ENCODE measurements at regions of chr3 and their contacts with region 1.

Region 1: DNA sequence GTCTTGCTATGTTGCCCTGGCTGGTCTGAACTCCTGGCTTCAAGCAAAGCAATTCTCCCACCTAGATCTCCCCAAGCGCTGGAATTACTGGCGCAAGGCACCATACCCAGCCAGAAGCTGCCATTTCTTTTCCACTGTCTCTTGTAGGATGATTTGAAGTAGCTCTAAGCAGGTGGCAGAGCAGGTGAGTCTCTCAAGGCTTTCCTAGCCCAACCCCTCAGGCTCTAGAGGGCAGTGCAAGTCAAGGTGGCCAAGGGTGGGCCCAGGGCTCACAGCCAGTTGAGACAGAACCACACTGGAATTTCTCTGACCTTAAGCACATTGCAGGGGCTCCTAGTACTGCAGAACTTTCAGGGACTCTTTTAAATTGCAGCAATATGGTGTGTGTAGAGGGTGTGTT is 15.6 kb upstream of the DAG1 start:
- DNase-seq: no peak
- H3K4me3 ChIP-seq: no peak overlapping the region
- H3K27ac ChIP-seq: no peak overlapping the region
- H3K4me1 ChIP-seq: no peaks in the 10 kb centered on the region
- H3K27me3 ChIP-seq: no peaks in the 10 kb centered on the region
- CTCF ChIP-seq: no peak
- POLR2A ChIP-seq: no peak

Region 2: DNA sequence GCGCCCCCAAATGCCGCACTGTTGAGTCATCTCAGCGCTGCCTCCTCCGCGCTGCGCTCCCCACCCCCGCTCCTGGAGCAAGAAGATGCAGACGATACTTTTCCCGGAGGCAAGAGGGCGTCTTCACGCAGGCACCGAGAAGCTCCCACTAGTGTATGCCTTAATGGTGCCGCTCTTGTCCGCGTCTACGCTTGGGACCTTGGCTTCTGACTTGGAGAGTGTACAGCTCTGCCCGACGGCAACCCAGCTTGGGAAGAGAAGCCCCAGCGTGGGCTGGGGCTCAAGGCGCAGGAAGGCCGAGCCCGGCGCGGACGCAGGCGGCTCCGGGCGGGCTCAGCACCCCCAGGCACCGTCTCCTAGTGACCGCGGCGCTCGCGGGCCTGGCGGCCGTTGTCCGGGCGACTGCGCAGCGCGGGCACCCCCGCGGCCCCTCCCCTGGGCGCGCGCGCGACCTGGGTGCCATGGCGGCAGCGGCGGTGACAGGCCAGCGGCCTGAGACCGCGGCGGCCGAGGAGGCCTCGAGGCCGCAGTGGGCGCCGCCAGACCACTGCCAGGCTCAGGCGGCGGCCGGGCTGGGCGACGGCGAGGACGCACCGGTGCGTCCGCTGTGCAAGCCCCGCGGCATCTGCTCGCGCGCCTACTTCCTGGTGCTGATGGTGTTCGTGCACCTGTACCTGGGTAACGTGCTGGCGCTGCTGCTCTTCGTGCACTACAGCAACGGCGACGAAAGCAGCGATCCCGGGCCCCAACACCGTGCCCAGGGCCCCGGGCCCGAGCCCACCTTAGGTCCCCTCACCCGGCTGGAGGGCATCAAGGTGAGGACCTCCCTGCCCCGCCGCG is 464.4 kb before region 1 on chr3 and contains the start of gene P4HTM:
- CTCF ChIA-PET with region 1: interaction called, 25 read pairs
- POLR2A ChIA-PET with region 1: no interaction called
- dilution Hi-C with region 1: no loop called
- intact Hi-C with region 1: loop called (anchors 1 kb)
- DNase-seq: peak; percentile 93
- H3K4me3 ChIP-seq: peak within 1 kb of the TSS; percentile 25 to 69 (median 57)
- H3K27ac ChIP-seq: peak within 1 kb of the TSS; percentile 97
- H3K4me1 ChIP-seq: peaks cover 21% of the 10 kb centered on the region
- H3K27me3 ChIP-seq: no peaks in the 10 kb centered on the region
- CTCF ChIP-seq: peak in 1 of 2 donors; percentile 48
- POLR2A ChIP-seq: peak; percentile 61
- total RNA-seq, gene P4HTM: 23.0 and 26.9 TPM in 2 replicates

Region 3: DNA sequence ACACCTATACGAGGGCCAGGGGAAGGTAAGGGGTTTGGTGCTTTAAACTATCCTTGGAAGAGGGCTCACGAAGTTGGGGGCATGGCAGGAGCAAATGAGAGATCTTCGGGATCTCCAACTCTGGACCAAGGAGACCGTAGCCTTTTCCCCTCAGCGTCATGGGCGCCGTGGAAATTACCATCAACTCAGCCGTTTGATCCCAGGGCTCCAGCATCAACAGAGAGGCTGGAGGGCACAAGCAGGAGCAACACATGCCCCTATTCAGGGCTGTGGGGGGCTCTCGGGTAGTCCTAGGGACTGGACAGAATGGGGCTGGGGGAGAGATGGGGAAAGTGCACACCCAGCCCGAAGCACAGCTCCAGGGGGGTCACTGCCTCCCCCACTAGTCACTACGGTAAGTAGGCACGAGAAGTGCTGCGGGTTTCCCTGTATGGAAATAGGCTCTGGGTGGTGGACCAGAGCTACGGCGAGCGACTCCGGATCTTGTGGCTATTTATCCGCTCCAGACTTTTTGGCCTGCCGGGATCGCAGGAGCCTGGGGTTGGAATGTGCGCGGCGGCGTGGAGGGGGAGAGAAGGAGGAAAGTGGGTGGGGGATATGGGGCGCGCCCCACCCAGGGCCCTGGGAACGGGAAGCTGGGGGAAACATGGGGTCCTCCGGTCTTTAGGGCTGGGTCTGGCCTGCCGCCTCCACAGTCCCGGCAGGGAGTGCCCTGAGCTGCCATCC is 321.1 kb before region 1 on chr3:
- CTCF ChIA-PET with region 1: interaction called, 19 read pairs
- POLR2A ChIA-PET with region 1: no interaction called
- dilution Hi-C with region 1: no loop called
- intact Hi-C with region 1: no loop called
- DNase-seq: peak; percentile 92
- H3K4me3 ChIP-seq: peak overlapping the region; percentile 58 to 89 (median 83)
- H3K27ac ChIP-seq: peak overlapping the region; percentile 58
- H3K4me1 ChIP-seq: peaks cover 14% of the 10 kb centered on the region
- H3K27me3 ChIP-seq: no peaks in the 10 kb centered on the region
- CTCF ChIP-seq: no peak
- POLR2A ChIP-seq: peak; percentile 76

Region 4: GRCh38 chr3:49300595-49300994 is 153.9 kb before region 1 on chr3:
- CTCF ChIA-PET with region 1: interaction called, 29 read pairs
- POLR2A ChIA-PET with region 1: no interaction called
- dilution Hi-C with region 1: no loop called
- intact Hi-C with region 1: loop called (anchors 1 kb)
- DNase-seq: no peak
- H3K4me3 ChIP-seq: no peak overlapping the region
- H3K27ac ChIP-seq: no peak overlapping the region
- H3K4me1 ChIP-seq: no peaks in the 10 kb centered on the region
- H3K27me3 ChIP-seq: no peaks in the 10 kb centered on the region
- CTCF ChIP-seq: no peak
- POLR2A ChIP-seq: no peak

Region 5: GRCh38 chr3:49358217-49358883 is 96.1 kb before region 1 on chr3 and contains the start of gene GPX1:
- CTCF ChIA-PET with region 1: interaction called, 16 read pairs
- POLR2A ChIA-PET with region 1: interaction called, 3 read pairs
- dilution Hi-C with region 1: no loop called
- intact Hi-C with region 1: no loop called
- DNase-seq: peak; percentile 94
- H3K4me3 ChIP-seq: peak within 1 kb of the TSS; percentile 25 to 76 (median 71)
- H3K27ac ChIP-seq: peak within 1 kb of the TSS; percentile 66
- H3K4me1 ChIP-seq: peaks cover 31% of the 10 kb centered on the region
- H3K27me3 ChIP-seq: no peaks in the 10 kb centered on the region
- CTCF ChIP-seq: no peak
- POLR2A ChIP-seq: peak; percentile 98
- total RNA-seq, gene GPX1: 427 and 461 TPM in 2 replicates

Region 6: GRCh38 chr3:49422379-49423248 is 31.8 kb before region 1 on chr3 and contains the start of gene AMT:
- CTCF ChIA-PET with region 1: interaction called, 13 read pairs
- POLR2A ChIA-PET with region 1: no interaction called
- dilution Hi-C with region 1: no loop called
- intact Hi-C with region 1: no loop called
- DNase-seq: no peak
- H3K4me3 ChIP-seq: no peak within 1 kb of the TSS
- H3K27ac ChIP-seq: no peak within 1 kb of the TSS
- H3K4me1 ChIP-seq: no peaks in the 10 kb centered on the region
- H3K27me3 ChIP-seq: no peaks in the 10 kb centered on the region
- CTCF ChIP-seq: no peak
- POLR2A ChIP-seq: no peak
- total RNA-seq, gene AMT: 3.3 and 4.4 TPM in 2 replicates

Measured in endothelial cell of umbilical vein (primary cell).